ENCODE measurements at regions of chrX and their contacts with region 1.

Region 1: GRCh38 chrX:1554469-1555210 is 17.7 kb upstream of the P2RY8 start:
- DNase-seq: peak; percentile 52 to 93 (median 70)
- ATAC-seq: peak; percentile 97
- H3K4me3 ChIP-seq: peak overlapping the region; percentile 4
- H3K4me3 Mint-ChIP-seq: peak overlapping the region; percentile 78
- H3K27ac ChIP-seq: peak overlapping the region; percentile 55 to 77
- H3K27ac Mint-ChIP-seq: peak overlapping the region; percentile 98
- H3K4me1 ChIP-seq: peaks cover 76% of the 10 kb centered on the region
- H3K4me1 Mint-ChIP-seq: peaks cover 70% of the 10 kb centered on the region
- H3K27me3 ChIP-seq: no peaks in the 10 kb centered on the region
- H3K27me3 Mint-ChIP-seq: no peaks in the 10 kb centered on the region
- CTCF ChIP-seq: no peak

Region 2: GRCh38 chrX:1521459-1521956 is 33.1 kb before region 1 on chrX:
- CTCF ChIA-PET with region 1: no interaction called
- POLR2A ChIA-PET with region 1: no interaction called
- intact Hi-C with region 1: loop called in 1 of 2 experiments (anchors 1 kb)
- DNase-seq: peak in 13 of 14 experiments; percentile 35 to 90 (median 54)
- ATAC-seq: peak; percentile 68
- H3K4me3 ChIP-seq: peak overlapping the region; percentile 1
- H3K4me3 Mint-ChIP-seq: peak overlapping the region; percentile 84
- H3K27ac ChIP-seq: peak overlapping the region; percentile 32 to 33
- H3K27ac Mint-ChIP-seq: peak overlapping the region; percentile 83
- H3K4me1 ChIP-seq: peaks cover 54% of the 10 kb centered on the region
- H3K4me1 Mint-ChIP-seq: peaks cover 57% of the 10 kb centered on the region
- H3K27me3 ChIP-seq: no peaks in the 10 kb centered on the region
- H3K27me3 Mint-ChIP-seq: no peaks in the 10 kb centered on the region
- CTCF ChIP-seq: no peak

Region 3: DNA sequence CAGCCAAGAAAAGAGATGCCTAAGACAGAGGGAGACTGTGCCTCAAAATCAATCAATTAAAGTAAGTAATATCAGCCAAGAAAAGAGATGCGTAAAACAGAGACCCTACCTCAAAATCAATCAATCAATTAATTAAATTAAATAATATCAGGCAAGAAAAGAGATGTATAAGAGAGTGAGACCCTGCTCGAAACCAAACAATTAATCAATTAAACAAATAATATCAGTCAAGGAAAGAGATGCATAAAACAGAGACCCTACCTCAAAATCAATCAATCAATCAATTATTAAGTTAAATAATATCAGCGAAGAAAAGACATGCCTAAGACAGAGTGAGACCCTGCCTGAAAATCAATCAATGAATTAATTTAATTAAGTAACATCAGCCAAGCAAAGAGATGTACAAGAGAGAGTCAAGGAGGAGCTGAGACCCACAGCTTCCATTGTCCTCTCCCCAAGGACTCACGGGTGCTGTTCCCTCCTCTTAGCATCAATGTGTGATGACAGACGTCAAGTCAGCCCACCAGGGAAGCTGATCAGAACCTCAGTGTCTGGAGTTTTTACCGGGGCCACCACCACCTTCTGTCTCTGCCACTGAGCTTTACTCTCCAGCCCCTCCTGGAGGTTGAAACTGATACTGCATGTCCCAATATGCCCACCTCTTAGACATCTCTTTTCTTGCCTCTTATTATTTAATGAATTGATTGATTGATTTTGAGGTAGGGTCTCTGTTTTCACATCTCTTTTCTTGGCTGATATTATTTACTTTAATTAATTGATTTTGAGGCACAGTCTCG is 26.3 kb after region 1 on chrX:
- CTCF ChIA-PET with region 1: no interaction called
- POLR2A ChIA-PET with region 1: no interaction called
- intact Hi-C with region 1: loop called in 1 of 2 experiments (anchors 2 kb)
- DNase-seq: peak; percentile 44 to 86 (median 65)
- ATAC-seq: peak; percentile 83
- H3K4me3 ChIP-seq: no peak overlapping the region
- H3K4me3 Mint-ChIP-seq: peak overlapping the region; percentile 66
- H3K27ac ChIP-seq: no peak overlapping the region
- H3K27ac Mint-ChIP-seq: peak overlapping the region; percentile 74
- H3K4me1 ChIP-seq: peaks cover 55% of the 10 kb centered on the region
- H3K4me1 Mint-ChIP-seq: peaks cover 19% of the 10 kb centered on the region
- H3K27me3 ChIP-seq: no peaks in the 10 kb centered on the region
- H3K27me3 Mint-ChIP-seq: no peaks in the 10 kb centered on the region
- CTCF ChIP-seq: peak; percentile 72

Measured in CD4-positive, alpha-beta T cell (primary cell).